Activated CD4-positive, alpha-beta memory T cell treated with anti-CD3 and anti-CD28 coated beads, Interleukin-2, amount 10 ng/mL, durations not matched to agents 7 days and 5 days (primary cell): ENCODE measurements at regions of chr2 and their contacts with region 1.

Region 1: DNA sequence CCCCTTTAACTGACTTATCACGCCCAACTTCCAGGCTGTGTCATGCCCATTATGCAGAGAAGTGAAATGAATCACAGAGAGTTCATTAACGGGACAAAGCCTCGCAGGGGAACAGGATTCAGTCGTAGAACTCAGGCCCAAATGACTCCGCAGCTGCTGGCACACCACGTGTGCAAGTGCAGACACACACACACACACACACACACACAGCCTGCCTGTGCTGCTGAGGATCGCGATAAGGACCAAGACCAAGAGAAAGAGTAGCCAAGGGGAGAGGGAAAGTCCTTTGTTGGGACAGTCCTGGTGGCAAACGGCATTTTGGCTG is 90.0 kb upstream of the TAF1B start:
- DNase-seq: peak; percentile 80
- H3K4me3 Mint-ChIP-seq: peak overlapping the region; percentile 95
- H3K27ac Mint-ChIP-seq: peak overlapping the region; percentile 100
- H3K4me1 Mint-ChIP-seq: peaks cover 76% of the 10 kb centered on the region
- H3K27me3 Mint-ChIP-seq: peaks cover 8% of the 10 kb centered on the region

Region 2: DNA sequence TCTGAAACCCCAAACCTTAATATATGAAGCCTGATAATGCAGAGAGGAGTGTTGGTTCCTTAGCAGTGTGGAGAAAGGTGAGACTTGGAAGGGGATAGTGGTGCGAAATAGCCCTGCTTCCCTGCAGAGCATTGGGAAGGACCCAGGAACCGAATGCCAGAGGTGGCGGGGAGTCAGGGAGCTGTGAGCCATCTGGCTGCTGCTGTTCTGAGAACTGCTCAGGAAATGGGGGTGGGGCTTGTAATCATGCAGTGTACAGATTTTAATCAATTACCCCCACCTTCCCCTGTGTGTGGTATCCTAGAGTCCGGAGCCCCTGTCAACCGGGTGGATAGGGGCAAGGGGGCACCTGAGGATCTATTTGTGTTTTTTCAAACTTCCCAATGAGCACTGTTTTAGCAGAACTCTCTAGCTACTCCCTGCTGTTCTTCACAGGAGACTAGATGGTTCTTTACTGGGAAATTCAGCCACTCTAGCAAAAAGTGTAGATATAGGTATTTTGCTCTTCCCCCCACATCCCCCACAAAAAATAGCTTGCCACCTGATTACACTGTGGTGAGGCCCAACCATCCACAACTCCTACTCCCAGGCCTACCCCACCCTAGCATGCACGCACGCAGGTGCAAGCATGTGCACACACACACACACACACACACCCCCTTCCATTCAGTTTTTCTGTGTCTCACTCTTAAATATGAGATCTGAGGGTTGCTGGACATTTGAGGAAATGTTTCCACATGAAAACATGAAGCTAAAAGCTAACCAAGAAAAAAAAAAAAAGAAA is 719.7 kb before region 1 on chr2:
- CTCF ChIA-PET with region 1: no interaction called
- POLR2A ChIA-PET with region 1: no interaction called
- DNase-seq: no peak
- H3K4me3 Mint-ChIP-seq: no peak overlapping the region
- H3K27ac Mint-ChIP-seq: no peak overlapping the region
- H3K4me1 Mint-ChIP-seq: peaks cover 17% of the 10 kb centered on the region
- H3K27me3 Mint-ChIP-seq: peaks cover 35% of the 10 kb centered on the region

Region 3: GRCh38 chr2:9474361-9474967 is 278.8 kb before region 1 on chr2 and contains the start of gene IAH1:
- CTCF ChIA-PET with region 1: no interaction called
- POLR2A ChIA-PET with region 1: interaction called, 12 read pairs
- DNase-seq: peak; percentile 76
- H3K4me3 Mint-ChIP-seq: peak within 1 kb of the TSS; percentile 79
- H3K27ac Mint-ChIP-seq: peak within 1 kb of the TSS; percentile 80
- H3K4me1 Mint-ChIP-seq: peaks cover 52% of the 10 kb centered on the region
- H3K27me3 Mint-ChIP-seq: no peaks in the 10 kb centered on the region
- total RNA-seq, gene IAH1: 69.2 to 79.0 TPM

Region 4: DNA sequence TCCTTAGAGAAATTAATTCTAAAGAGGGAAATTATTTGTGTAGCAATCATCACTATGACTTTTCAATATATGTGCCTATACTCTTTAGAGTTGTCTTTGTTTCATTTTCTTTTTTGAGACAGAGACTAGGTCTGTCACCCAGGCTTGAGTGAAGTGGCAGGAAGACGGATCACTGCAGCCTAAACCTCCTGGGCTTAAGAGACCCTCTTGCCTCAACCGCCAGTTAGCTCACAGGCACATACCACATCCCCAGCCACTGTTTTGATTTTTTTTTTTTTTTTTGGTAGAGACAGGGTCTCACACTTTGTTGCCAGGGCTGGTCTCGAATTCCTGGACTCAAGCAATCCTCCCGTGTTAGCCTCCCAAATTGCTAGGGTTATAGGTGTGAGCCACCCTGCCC is 134.8 kb before region 1 on chr2:
- CTCF ChIA-PET with region 1: no interaction called
- POLR2A ChIA-PET with region 1: interaction called, 11 read pairs
- DNase-seq: peak; percentile 52
- H3K4me3 Mint-ChIP-seq: peak overlapping the region; percentile 50
- H3K27ac Mint-ChIP-seq: peak overlapping the region; percentile 81
- H3K4me1 Mint-ChIP-seq: peaks cover 89% of the 10 kb centered on the region
- H3K27me3 Mint-ChIP-seq: no peaks in the 10 kb centered on the region

Region 5: GRCh38 chr2:9663008-9663879 is 90.0 kb before region 1 on chr2:
- CTCF ChIA-PET with region 1: no interaction called
- POLR2A ChIA-PET with region 1: interaction called, 10 read pairs
- DNase-seq: no peak
- H3K4me3 Mint-ChIP-seq: no peak overlapping the region
- H3K27ac Mint-ChIP-seq: peak overlapping the region; percentile 74
- H3K4me1 Mint-ChIP-seq: peaks cover 32% of the 10 kb centered on the region
- H3K27me3 Mint-ChIP-seq: peaks cover 3% of the 10 kb centered on the region

Region 6: DNA sequence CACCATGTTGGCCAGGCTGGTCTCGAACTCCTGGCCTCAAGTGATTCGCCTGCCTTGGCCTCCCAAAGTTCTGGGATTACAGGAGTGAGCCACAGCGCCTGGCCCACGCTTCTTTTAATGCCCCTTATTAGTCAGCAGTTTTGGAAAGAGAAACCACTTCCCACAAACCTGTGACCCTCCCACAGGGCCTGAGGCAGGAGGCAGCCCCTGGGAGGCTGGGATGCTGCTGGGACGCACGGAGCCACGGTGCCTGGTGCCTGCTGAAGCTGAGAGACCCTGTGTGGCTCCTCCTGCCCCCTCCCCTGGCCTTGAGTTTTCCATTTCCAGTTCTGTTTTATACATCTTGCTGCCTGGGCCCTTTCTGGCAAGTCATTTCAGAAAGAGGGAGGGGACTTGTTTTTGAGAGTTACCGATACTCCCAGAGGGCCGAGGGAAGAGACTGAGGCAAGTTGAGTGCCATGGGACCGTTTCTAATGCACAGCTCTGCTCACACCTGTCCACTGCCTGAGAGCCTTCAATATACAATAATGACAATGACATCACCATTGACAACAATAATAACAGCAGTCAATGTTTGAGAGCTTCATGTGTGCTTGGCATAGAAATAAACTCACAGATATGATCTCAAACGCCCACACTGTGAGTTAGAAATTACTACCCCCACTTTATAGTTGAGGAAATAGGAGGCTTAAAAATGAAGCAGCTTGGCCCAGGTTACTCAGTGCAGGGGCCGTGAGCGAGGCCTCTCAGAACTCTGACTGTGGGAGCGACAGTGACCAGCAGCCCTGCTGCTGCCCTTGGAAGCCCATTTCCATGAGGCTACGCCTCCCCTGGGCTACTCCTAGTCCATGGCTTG is 44.3 kb before region 1 on chr2:
- CTCF ChIA-PET with region 1: interaction called, 8 read pairs
- POLR2A ChIA-PET with region 1: interaction called, 42 read pairs
- DNase-seq: no peak
- H3K4me3 Mint-ChIP-seq: no peak overlapping the region
- H3K27ac Mint-ChIP-seq: peak overlapping the region; percentile 79
- H3K4me1 Mint-ChIP-seq: peaks cover 80% of the 10 kb centered on the region
- H3K27me3 Mint-ChIP-seq: no peaks in the 10 kb centered on the region

Region 7: GRCh38 chr2:9763356-9764152 is 10.3 kb after region 1 on chr2:
- CTCF ChIA-PET with region 1: interaction called, 4 read pairs
- POLR2A ChIA-PET with region 1: interaction called, 26 read pairs
- DNase-seq: peak; percentile 52
- H3K4me3 Mint-ChIP-seq: no peak overlapping the region
- H3K27ac Mint-ChIP-seq: peak overlapping the region; percentile 4
- H3K4me1 Mint-ChIP-seq: peaks cover 67% of the 10 kb centered on the region
- H3K27me3 Mint-ChIP-seq: no peaks in the 10 kb centered on the region

Region 8: GRCh38 chr2:9778012-9778411 is 24.8 kb after region 1 on chr2:
- CTCF ChIA-PET with region 1: interaction called, 4 read pairs
- POLR2A ChIA-PET with region 1: interaction called, 26 read pairs
- DNase-seq: peak; percentile 41
- H3K4me3 Mint-ChIP-seq: no peak overlapping the region
- H3K27ac Mint-ChIP-seq: no peak overlapping the region
- H3K4me1 Mint-ChIP-seq: peaks cover 54% of the 10 kb centered on the region
- H3K27me3 Mint-ChIP-seq: no peaks in the 10 kb centered on the region

Region 9: GRCh38 chr2:10103179-10103732 is 350.0 kb after region 1 on chr2:
- CTCF ChIA-PET with region 1: no interaction called
- POLR2A ChIA-PET with region 1: no interaction called
- DNase-seq: no peak
- H3K4me3 Mint-ChIP-seq: no peak overlapping the region
- H3K27ac Mint-ChIP-seq: no peak overlapping the region
- H3K4me1 Mint-ChIP-seq: no peaks in the 10 kb centered on the region
- H3K27me3 Mint-ChIP-seq: peaks cover 11% of the 10 kb centered on the region